GM12878 (cell line): ENCODE measurements at regions of chr13 and their contacts with region 1.

Region 1: DNA sequence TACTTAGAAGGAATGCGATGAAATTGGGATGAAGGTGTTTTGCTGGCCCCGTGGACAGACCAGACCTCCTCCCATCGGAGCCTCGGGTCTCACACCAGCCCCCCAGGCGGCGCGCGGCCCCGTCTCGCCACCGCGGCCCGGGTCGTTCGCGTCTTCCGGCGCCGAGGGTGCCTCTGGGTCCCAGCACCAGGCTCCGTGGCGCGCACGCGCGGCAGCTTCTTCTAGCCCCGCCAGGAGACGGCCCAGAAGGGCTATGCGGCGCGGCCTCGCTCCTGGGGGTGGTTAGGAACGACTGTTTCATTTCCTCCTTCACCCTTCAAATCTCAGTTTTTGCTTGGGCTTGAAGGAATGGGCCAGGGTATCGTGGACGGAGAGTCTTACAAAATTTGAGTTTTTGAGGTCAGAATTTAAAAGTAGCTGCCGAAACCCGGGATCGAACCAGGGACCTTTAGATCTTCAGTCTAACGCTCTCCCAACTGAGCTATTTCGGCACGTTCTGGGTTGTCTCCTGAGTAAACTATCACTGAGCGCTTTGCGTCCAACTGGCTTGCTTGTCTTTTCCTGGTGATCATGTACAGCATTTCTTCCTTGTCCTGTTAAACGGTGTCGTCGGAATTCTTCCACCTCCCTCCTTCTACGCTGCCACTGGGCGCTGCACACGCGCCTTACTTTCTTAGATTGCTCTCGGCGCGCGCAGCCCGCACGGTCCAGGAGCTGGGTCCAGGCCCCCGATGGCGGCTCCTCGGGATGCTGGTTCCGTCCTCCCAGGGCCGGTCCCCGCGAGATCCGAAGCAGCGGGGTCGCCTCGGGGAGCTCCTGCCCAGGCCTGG is 46.5 kb downstream of the TGDS start:
- DNase-seq: peak; percentile 93
- ATAC-seq: peak; percentile 96
- H3K4me3 ChIP-seq: peak overlapping the region; percentile 83
- H3K27ac ChIP-seq: peak overlapping the region; percentile 92
- H3K4me1 ChIP-seq: no peaks in the 10 kb centered on the region
- H3K27me3 ChIP-seq: no peaks in the 10 kb centered on the region
- CTCF ChIP-seq: no peak; a peak in 1 of 6 replicates
- EP300 ChIP-seq: no peak
- POLR2A ChIP-seq: peak; percentile 90
- RAD21 ChIP-seq: no peak

Region 2: DNA sequence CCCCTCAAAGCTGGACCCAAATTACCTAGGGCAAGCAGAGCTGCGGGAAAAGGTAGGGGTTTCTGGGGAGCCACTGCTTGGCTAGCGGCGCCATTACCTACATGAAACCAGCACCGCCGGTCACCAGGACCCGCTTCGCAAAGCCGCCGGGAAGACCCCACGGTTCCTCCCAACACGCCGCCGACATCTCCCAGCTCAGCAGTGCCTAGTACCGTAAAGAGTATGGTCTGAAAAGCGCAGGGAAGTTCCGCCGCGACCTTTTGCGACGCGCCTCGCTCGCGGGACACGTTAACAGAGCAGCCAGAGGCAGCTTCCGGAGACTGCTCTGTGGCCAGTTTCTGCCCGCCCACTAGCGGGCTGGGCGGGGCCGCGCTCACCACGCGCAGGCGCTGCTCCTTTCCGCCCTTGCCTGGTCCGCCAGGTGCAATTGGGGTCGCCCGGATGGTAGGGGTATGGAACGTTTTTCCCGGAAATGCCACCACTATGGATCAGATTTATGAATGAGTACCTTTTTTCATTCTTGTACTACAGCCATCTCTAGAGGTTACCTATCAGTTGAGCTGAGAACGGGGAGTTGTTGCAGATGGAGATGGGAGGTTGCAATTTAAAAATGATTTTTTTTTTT is 46.6 kb after region 1 on chr13 and contains the start of gene TGDS:
- CTCF ChIA-PET with region 1: interaction called, 5 read pairs
- POLR2A ChIA-PET with region 1: interaction called, 22 read pairs
- RAD21 ChIA-PET with region 1: interaction called, 10 read pairs
- SMC1A ChIA-PET with region 1: interaction called, 11 read pairs
- in situ Hi-C with region 1: no loop called
- intact Hi-C with region 1: loop called (anchors 1 kb)
- DNase-seq: peak; percentile 79
- ATAC-seq: peak; percentile 96
- H3K4me3 ChIP-seq: peak within 1 kb of the TSS; percentile 74
- H3K27ac ChIP-seq: peak within 1 kb of the TSS; percentile 91
- H3K4me1 ChIP-seq: peaks cover 3% of the 10 kb centered on the region; the same call in 1 of the 2 replicates
- H3K27me3 ChIP-seq: no peaks in the 10 kb centered on the region
- CTCF ChIP-seq: no peak
- EP300 ChIP-seq: no peak
- POLR2A ChIP-seq: peak; percentile 97
- RAD21 ChIP-seq: no peak
- polyA plus RNA-seq, gene TGDS: 28.1 to 42.7 TPM

Region 3: GRCh38 chr13:94601446-94602431 is 52.3 kb after region 1 on chr13 and contains the start of gene GPR180:
- CTCF ChIA-PET with region 1: interaction called, 8 read pairs
- POLR2A ChIA-PET with region 1: interaction called, 22 read pairs
- RAD21 ChIA-PET with region 1: interaction called, 5 read pairs
- SMC1A ChIA-PET with region 1: interaction called, 11 read pairs
- in situ Hi-C with region 1: no loop called
- intact Hi-C with region 1: loop called (anchors 1 kb)
- DNase-seq: peak; percentile 95
- ATAC-seq: peak; percentile 99
- H3K4me3 ChIP-seq: peak within 1 kb of the TSS; percentile 90
- H3K27ac ChIP-seq: peak within 1 kb of the TSS; percentile 80
- H3K4me1 ChIP-seq: peaks cover 6% of the 10 kb centered on the region; the same call in 1 of the 2 replicates
- H3K27me3 ChIP-seq: no peaks in the 10 kb centered on the region
- CTCF ChIP-seq: no peak
- EP300 ChIP-seq: no peak
- POLR2A ChIP-seq: peak; percentile 90
- RAD21 ChIP-seq: no peak
- polyA plus RNA-seq, gene GPR180: 1.6 to 1.8 TPM

Region 4: DNA sequence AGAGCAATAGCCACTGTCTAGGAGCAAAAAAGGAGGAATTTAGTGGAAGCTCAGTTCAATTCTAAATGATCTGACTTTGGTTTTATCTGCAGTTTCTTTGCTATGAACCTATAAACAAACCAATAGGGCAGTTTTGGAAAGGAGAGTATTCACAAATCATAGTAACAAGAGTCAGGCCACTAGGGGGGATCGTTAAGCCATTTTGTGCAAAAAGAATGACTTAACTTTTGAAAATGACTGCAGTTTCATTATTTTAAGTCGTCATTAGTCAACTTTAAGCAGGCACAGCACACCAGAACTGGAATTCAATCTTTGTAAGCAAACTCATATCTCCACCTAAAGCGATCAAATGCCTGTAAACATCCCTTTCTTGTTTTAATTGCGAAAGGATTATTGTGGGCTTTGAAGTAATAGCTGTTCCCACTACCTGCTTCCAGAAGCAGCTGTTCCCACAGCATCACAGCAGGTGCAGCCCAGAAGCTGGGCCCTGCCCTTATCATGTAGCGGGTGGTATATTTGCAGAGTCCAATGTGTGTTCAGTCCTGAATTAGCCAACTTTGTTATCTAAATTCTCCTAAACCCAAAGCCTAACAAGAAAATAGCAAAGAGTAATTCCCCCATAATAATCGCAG is 111.4 kb after region 1 on chr13:
- CTCF ChIA-PET with region 1: no interaction called
- POLR2A ChIA-PET with region 1: no interaction called
- RAD21 ChIA-PET with region 1: no interaction called
- SMC1A ChIA-PET with region 1: no interaction called
- in situ Hi-C with region 1: no loop called
- intact Hi-C with region 1: no loop called
- DNase-seq: no peak
- ATAC-seq: peak; percentile 47
- H3K4me3 ChIP-seq: no peak overlapping the region
- H3K27ac ChIP-seq: no peak overlapping the region
- H3K4me1 ChIP-seq: peaks cover 9% of the 10 kb centered on the region
- H3K27me3 ChIP-seq: 0 out of 4 replicates have a peak, but pooled peaks cover 0 to 2% of the 10 kb centered on the region in 2 experiments
- CTCF ChIP-seq: peak in 2 of 3 experiments; percentile 27 to 29; a peak in 3 of 6 replicates
- EP300 ChIP-seq: no peak
- POLR2A ChIP-seq: no peak
- RAD21 ChIP-seq: peak; percentile 35